Esophagus squamous epithelium (tissue), 5 donors: ENCODE measurements at regions of chr17 and their contacts with region 1.

Region 1: DNA sequence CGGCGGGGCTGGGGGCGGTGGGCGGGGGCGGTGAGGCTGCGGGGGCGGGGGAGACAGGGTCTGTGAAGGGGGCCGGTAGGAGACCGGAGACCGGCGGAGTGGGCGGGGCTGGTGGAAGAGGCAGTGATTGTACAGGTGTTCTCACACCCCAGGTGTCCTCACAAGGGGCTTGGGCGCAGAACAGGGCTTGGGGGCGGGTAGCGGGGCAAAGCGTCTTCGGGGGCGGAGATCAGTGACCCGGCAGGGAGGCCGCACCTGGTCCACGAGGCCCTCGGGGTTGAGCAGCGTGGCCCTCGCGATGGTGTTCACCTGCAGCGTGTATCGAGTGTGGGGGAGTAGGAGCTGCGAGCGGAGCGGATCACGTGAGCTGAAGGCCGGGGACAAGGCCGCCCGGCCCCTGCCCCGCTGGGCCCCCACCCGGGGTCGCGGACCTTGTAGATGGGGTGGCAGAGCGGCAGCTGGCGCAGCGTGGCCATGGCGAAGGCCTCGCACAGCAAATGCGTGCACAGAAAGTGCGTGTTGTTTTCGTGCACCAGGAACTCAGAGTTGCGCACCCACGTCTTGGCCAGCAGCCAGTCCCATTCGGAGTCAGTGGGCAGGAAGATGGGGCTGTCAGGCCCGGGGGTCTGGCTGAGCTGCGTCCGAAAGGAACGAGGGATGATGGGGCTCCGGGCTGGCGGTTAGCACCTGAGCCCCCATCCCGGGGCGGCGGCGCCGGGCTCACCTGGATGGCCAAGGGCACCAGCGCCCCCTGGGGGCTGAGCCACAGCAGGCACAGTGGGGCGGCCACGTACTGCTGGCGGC is 8.5 kb downstream of the ALOXE3 start:
- DNase-seq: no peak
- H3K4me3 ChIP-seq: peak overlapping the region; percentile 32 to 63 (median 48)
- H3K27ac ChIP-seq: peak overlapping the region in 1 of 4 donors; percentile 21
- H3K4me1 ChIP-seq: peaks cover 9 to 44% (median 11%) of the 10 kb centered on the region in 3 donors
- H3K27me3 ChIP-seq: peaks cover 0 to 69% (median 2%) of the 10 kb centered on the region in 4 donors
- CTCF ChIP-seq: peak; percentile 89 to 96 (median 91)
- POLR2A ChIP-seq: no peak

Region 2: DNA sequence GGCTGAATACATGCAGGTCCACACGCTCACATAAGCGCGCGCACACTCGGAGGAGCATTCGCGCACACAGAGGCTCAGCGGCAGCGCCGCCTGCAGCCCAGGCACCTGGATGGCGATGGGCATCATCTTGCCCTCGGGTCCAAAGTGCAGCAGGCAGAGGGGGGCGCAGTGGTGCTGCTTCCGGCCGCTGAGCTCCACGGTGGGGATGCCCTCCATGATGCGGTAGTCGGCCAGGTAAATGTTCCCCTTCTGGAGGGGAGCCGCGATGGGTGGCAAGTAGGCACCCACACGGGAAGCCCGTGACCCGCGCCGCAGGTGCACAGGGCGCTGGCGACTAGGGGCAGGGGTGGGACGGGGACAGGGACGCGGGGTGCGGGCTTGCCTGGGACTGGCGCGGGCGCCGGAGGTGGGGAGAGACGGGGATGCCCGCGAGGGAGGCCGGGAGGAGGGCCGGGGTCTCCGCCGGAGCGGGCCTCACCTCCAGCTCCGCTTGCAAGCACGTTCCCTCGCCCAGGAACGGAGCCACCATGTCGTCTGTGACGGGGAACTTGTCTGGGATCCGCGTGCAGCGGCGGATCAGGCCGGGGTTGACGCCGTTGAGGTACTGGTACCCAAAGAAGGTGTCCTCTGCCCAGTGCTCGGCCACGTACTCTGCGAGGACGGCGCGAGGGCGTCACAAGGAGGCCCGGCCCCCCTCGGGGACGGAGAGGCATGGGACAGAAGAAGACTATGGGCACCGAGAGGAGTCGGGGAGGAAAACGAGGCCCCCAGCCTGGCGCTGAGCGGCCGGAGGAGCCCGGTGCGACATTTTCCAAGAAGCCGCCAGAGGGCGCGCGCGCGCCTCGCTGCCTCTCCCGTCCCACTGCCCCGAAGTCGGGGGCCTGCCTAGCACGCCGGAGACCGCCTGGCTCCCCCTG is 30.3 kb before region 1 on chr17:
- intact Hi-C with region 1: loop called (anchors 5 kb)
- DNase-seq: no peak
- H3K4me3 ChIP-seq: peak overlapping the region; percentile 19 to 64 (median 44)
- H3K27ac ChIP-seq: peak overlapping the region in 2 of 4 donors; percentile 33 to 36
- H3K4me1 ChIP-seq: peaks cover 7 to 24% (median 17%) of the 10 kb centered on the region in 3 donors
- H3K27me3 ChIP-seq: peaks cover 0 to 98% (median 5%) of the 10 kb centered on the region in 4 donors
- CTCF ChIP-seq: peak; percentile 83 to 95 (median 88)
- POLR2A ChIP-seq: no peak

Region 3: GRCh38 chr17:8275421-8276290 is 165.8 kb after region 1 on chr17:
- intact Hi-C with region 1: no loop called
- DNase-seq: no peak
- H3K4me3 ChIP-seq: no peak overlapping the region
- H3K27ac ChIP-seq: no peak overlapping the region
- H3K4me1 ChIP-seq: no peaks in the 10 kb centered on the region
- H3K27me3 ChIP-seq: no peaks in the 10 kb centered on the region
- CTCF ChIP-seq: no peak
- POLR2A ChIP-seq: no peak